Activated T-helper 1 cell treated with anti-CD3 and anti-CD28 coated beads, Interleukin-12 subunit alpha, Interleukin-12 subunit beta, Interleukin-2, Interleukin-4 antibody, amounts not matched to agents 30 ng/mL and 10 ng/mL and 1 ng/mL, durations not matched to agents 14 hours and 24 hours and 36 hours (primary cell): ENCODE measurements at regions of chr7 and their contacts with region 1.

Region 1: GRCh38 chr7:23181684-23182553 is at the start of gene NUP42:
- DNase-seq: peak; percentile 96
- H3K4me3 Mint-ChIP-seq: peak within 1 kb of the TSS; percentile 90
- H3K27ac Mint-ChIP-seq: peak within 1 kb of the TSS; percentile 99
- H3K4me1 Mint-ChIP-seq: peaks cover 35% of the 10 kb centered on the region
- H3K27me3 Mint-ChIP-seq: peaks cover 8% of the 10 kb centered on the region
- total RNA-seq, gene NUP42: 52.7 and 55.2 TPM in 2 replicates

Region 2: DNA sequence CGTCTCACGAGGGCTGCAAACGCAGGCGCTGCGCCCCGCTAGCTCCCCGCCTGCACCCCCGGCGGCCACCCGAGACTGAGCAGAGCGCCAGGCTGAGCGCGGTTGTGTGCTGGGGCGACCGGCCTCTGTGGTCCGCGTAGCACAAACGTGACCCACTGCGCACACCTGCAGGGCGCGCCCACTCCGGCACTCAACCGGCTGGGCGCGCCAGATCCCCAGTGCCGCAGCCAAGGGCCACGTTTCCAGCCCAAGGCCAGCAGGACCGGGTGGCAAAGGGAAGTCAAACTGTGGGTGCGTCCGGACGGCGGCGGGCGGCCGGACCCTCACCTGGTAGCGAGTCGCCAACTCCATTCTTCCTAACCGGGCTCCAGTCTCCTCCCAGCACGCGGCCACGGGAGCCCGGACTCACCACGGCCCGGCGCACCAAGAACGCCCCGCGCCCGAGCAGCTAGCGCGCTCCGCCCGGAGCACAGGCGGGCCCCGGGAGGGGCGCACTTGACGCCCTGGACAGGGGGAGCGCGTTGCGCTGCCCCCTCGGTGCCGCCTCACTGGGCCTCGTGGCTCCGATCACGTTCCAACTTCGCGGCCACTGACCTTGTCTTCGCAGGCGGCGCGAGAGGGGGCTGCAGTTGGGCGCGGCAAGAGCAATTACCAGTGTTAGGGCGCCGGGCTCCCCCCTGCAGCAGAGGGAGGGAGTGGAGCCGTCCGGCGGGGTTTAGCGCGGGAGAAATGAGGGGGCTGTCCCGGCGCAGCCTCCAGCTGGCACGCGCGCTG is 1236.3 kb before region 1 on chr7 and contains the start of gene CDCA7L:
- intact Hi-C with region 1: loop called (anchors 2 kb)
- DNase-seq: peak; percentile 54
- H3K4me3 Mint-ChIP-seq: peak within 1 kb of the TSS; percentile 94
- H3K27ac Mint-ChIP-seq: peak within 1 kb of the TSS; percentile 95
- H3K4me1 Mint-ChIP-seq: peaks cover 69% of the 10 kb centered on the region
- H3K27me3 Mint-ChIP-seq: peaks cover 16% of the 10 kb centered on the region
- total RNA-seq, gene CDCA7L: 102 and 113 TPM in 2 replicates

Region 3: GRCh38 chr7:22759721-22760120 is 422.2 kb before region 1 on chr7:
- intact Hi-C with region 1: no loop called
- DNase-seq: no peak
- H3K4me3 Mint-ChIP-seq: no peak overlapping the region
- H3K27ac Mint-ChIP-seq: no peak overlapping the region
- H3K4me1 Mint-ChIP-seq: no peaks in the 10 kb centered on the region
- H3K27me3 Mint-ChIP-seq: peaks cover 28% of the 10 kb centered on the region

Region 4: DNA sequence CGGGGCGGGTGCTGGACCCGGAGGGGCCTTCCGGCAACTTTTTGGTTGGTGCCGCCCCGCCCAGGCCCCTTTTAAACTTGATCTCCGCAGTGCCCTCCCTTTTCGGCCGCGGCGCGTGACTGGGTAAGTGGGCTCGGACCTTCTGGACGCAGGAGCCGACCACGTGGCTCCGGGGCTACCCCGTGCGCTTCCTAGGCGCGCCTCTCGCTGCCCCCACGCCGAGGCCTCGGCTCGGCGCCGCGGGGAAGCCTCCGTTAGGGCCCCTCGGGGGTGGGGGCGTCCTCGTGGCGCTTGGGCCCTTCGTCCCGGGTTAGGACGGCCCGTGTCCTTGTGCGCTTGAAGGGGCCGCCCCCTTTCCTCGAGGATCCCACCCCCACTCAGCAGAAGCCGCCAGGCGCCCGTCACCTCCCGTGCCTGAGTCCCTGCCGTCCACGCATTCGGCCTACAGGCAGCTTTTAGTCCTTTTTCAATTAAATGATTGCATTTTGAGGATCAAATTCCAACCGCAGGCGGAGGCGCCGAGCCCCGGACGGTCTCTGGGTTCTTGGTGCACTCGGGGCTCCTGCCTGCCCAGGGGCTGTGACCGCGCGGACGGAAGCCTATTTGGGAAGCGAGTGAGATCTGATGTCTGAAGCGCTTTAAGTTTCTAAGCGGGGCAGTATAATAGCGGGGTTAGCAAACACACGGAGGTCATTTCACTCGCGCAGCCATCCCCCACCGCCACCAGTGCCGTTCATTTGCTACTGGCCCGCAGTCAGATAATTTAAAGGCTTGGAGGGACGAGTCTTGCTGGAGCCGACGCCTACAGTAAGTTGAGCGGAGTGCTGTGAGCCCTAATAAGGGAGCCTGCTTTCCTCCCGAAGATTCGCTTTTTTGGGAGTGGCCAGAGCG is 327.5 kb before region 1 on chr7:
- intact Hi-C with region 1: loop called (anchors 1 kb)
- DNase-seq: peak; percentile 75
- H3K4me3 Mint-ChIP-seq: peak overlapping the region; percentile 98
- H3K27ac Mint-ChIP-seq: peak overlapping the region; percentile 96
- H3K4me1 Mint-ChIP-seq: peaks cover 34% of the 10 kb centered on the region
- H3K27me3 Mint-ChIP-seq: peaks cover 3% of the 10 kb centered on the region

Region 5: DNA sequence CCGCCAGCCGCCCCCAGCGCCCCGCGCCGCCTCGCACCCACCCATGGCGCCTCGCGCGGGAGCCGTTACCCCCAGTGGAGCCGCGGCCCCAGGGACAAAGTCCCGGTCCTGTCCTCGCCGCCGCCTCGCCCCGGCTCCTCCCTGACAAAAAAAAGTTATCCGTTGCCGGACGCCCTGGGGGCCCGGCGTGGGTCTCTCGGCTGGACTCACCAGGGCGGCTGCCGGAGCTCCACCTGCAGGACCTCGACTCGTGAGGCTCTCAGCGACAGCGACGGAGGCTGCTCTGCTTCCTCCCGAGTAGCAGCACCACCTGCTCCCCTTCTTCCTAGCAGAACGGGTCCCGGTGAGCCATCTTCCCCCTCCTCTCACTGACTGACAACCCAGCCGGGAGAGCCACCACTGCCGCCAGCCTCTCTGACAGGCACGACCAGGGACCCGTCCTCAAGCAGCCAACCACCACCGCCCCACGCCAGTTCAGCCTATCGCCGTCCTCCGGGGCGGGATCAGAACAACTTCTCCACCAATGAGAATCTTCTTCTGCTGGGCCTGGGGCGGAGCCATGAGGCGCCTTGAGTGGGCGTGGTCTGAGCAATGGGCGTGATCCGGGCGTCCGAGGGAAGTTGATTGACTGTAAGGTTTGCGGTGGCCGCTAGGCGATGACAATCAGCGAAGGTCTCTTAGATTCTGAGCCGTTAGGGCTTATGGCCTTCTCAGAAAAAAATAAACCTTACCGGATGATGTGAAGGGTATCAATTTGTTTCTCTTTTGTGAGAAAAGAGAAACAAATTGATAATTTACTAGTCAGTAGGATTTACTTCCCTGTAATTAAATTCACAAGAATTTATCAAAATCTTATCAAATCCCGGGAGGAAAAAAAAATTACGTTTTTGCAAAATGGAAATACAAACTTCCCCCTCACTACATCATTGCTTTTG is 167.9 kb before region 1 on chr7 and contains the start of gene HYCC1:
- intact Hi-C with region 1: loop called (anchors 5 kb)
- DNase-seq: peak; percentile 99
- H3K4me3 Mint-ChIP-seq: peak within 1 kb of the TSS; percentile 93
- H3K27ac Mint-ChIP-seq: peak within 1 kb of the TSS; percentile 94
- H3K4me1 Mint-ChIP-seq: peaks cover 34% of the 10 kb centered on the region
- H3K27me3 Mint-ChIP-seq: no peaks in the 10 kb centered on the region
- total RNA-seq, gene HYCC1: 36.8 and 45.7 TPM in 2 replicates

Region 6: DNA sequence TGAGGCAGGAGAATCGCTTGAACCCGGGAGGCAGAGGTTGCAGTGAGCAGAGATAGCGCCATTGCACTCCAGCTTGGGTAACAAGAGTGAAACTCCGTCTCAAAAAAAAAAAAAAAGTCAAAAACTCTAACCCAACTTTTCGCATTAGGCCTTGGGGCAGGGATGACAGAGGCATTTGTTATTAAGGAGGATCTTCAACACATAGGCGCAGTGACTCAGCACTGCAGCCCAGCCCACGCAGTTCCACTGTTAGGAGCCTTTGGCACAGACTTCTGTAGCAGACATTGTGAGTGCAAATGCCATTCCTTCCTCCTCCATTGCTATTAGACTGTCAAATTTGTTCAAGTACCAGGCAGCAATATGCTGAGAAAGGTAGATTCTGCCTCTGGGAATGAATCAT is 119.5 kb before region 1 on chr7:
- intact Hi-C with region 1: no loop called
- DNase-seq: no peak
- H3K4me3 Mint-ChIP-seq: no peak overlapping the region
- H3K27ac Mint-ChIP-seq: no peak overlapping the region
- H3K4me1 Mint-ChIP-seq: no peaks in the 10 kb centered on the region
- H3K27me3 Mint-ChIP-seq: peaks cover 4% of the 10 kb centered on the region

Region 7: GRCh38 chr7:23135755-23136154 is 46.2 kb before region 1 on chr7:
- intact Hi-C with region 1: no loop called
- DNase-seq: no peak
- H3K4me3 Mint-ChIP-seq: no peak overlapping the region
- H3K27ac Mint-ChIP-seq: no peak overlapping the region
- H3K4me1 Mint-ChIP-seq: no peaks in the 10 kb centered on the region
- H3K27me3 Mint-ChIP-seq: peaks cover 2% of the 10 kb centered on the region

Region 8: DNA sequence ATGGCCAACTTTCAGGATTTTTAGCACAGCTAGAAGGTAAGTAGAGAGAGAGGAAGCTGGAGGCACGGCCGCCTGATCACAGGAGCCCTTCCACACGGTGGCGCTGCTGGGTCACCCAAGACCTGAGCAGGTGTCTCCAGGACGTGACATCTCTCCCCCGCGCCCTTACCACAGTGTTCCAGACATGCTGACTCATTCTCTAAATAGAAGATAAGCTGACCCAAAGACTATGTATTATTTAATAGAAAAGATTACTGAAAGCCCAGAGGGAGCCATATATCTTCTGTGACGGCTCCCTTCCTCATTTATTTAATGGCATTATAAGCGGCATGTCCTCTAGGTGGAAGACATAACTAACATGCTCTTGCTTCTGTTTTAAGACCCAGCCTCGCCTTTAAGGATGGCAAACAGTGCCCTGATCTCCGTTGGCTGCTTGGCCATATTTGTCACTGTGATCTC is 91.3 kb after region 1 on chr7:
- intact Hi-C with region 1: loop called (anchors 2 kb)
- DNase-seq: peak; percentile 80
- H3K4me3 Mint-ChIP-seq: peak overlapping the region; percentile 72
- H3K27ac Mint-ChIP-seq: peak overlapping the region; percentile 5
- H3K4me1 Mint-ChIP-seq: peaks cover 24% of the 10 kb centered on the region
- H3K27me3 Mint-ChIP-seq: peaks cover 4% of the 10 kb centered on the region

Region 9: DNA sequence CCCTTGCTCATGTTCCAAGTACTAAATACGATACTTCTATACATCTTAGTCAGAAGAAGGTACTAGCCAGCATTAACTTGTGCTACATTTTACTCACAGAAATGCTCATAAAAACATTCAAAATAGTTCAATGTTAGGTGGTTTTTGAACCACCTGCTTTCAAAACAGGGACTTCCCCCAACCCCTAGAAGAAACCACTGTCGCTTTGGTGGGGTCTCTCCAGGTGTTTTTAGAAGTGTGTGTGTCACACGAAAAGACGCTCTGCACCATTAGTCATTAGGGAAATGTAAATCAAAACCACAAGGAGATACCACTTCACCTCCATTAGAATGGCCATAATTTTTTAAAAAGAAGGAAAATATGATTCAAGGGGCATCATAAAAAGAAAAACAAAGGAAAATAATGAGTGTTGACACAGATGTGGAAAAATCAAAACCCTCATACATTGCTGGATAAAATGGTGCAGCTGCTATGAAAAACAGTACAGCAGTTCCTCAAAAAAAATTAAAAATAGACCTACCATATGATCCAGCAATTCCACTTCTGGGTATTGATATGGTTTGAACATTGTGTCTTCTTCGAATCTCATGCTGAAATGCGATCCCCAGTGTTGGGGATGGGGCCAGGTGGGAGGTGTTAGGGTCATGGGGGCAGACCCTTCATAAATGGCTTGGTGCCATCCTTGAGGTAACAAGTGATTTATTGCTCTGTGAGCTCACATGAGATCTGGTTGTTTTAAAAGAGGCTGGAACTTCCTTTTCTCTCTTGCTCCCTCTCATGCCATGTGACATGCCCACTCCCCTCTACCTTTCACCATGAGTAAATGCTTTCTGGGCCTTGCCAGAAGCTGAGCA is 191.5 kb after region 1 on chr7:
- intact Hi-C with region 1: loop called (anchors 5 kb)
- DNase-seq: no peak
- H3K4me3 Mint-ChIP-seq: peak overlapping the region; percentile 9
- H3K27ac Mint-ChIP-seq: peak overlapping the region; percentile 94
- H3K4me1 Mint-ChIP-seq: peaks cover 49% of the 10 kb centered on the region
- H3K27me3 Mint-ChIP-seq: peaks cover 6% of the 10 kb centered on the region

Region 10: DNA sequence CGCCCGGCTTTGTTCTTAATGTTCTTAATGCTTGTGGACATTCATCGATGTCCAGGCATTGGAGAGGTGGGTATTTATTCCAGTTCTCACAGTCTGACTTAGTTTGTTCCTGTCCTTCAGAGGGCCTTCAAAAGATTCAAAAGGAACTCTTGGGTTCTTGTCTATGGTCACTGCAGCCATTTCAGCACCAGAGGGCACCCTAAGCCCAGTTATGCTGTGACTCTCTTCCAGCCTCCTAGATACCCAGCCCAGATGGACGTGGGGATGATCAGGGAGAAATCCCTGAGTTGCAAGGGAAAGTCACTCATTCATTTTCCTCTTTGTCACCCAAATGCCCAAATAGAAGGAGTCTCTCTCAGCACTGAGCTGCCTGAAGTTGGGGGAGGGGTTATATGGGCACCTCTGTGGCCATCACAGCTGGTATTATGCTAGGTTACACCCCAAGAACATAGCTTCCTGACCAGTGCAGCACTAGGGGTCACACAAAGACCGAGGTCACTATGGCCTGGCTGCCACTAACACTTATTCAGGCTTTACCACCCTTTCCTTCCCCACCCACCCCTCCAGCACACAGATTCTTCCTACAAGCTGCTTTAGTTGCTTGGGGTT is 388.8 kb after region 1 on chr7:
- intact Hi-C with region 1: loop called (anchors 1 kb)
- DNase-seq: peak; percentile 48
- H3K4me3 Mint-ChIP-seq: no peak overlapping the region
- H3K27ac Mint-ChIP-seq: no peak overlapping the region
- H3K4me1 Mint-ChIP-seq: peaks cover 5% of the 10 kb centered on the region
- H3K27me3 Mint-ChIP-seq: peaks cover 6% of the 10 kb centered on the region

Region 11: DNA sequence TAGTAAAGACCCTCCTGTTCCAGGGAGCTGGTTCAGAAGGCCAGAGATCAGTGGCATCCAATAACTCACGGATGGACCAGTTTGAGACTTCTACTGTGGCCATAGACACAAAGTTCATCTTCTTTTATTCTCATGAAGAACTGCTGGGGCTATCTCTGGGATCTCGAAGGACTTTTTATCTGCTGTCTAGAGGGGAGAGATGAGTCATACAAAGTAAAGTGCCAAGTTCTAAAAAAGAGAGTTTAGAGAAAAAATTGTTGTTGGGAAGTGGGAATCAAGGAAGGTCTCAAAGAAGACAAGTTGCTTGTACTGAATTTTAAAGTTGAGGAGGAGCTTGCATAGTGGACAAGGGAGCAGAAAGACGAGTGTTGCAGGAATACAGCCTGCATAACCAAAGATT is 490.1 kb after region 1 on chr7:
- intact Hi-C with region 1: no loop called
- DNase-seq: no peak
- H3K4me3 Mint-ChIP-seq: no peak overlapping the region
- H3K27ac Mint-ChIP-seq: no peak overlapping the region
- H3K4me1 Mint-ChIP-seq: no peaks in the 10 kb centered on the region
- H3K27me3 Mint-ChIP-seq: peaks cover 29% of the 10 kb centered on the region